Activated T-helper 2 cell treated with anti-CD3 and anti-CD28 coated beads, Interferon-gamma antibody, Interleukin-2, Interleukin-4, amounts not matched to agents 10 μg/mL and 5 μg/mL and 100 μg/mL, durations not matched to agents 14 hours and 24 hours and 36 hours (primary cell): ENCODE measurements at regions of chr12 and their contacts with region 1.

Region 1: GRCh38 chr12:28253161-28253641 is 62.9 kb downstream of the CCDC91 start:
- DNase-seq: peak; percentile 11
- H3K4me3 Mint-ChIP-seq: peak overlapping the region; percentile 59
- H3K27ac Mint-ChIP-seq: peak overlapping the region; percentile 92
- H3K4me1 Mint-ChIP-seq: peaks cover 41% of the 10 kb centered on the region
- H3K27me3 Mint-ChIP-seq: peaks cover 2% of the 10 kb centered on the region

Region 2: GRCh38 chr12:27243804-27244683 is 1009.2 kb before region 1 on chr12 and contains the start of gene STK38L:
- intact Hi-C with region 1: loop called (anchors 5 kb)
- DNase-seq: peak; percentile 96
- H3K4me3 Mint-ChIP-seq: peak within 1 kb of the TSS; percentile 96
- H3K27ac Mint-ChIP-seq: peak within 1 kb of the TSS; percentile 94
- H3K4me1 Mint-ChIP-seq: peaks cover 35% of the 10 kb centered on the region
- H3K27me3 Mint-ChIP-seq: no peaks in the 10 kb centered on the region
- total RNA-seq, gene STK38L: 23.4 and 24.2 TPM in 2 replicates

Region 3: GRCh38 chr12:27984275-27984674 is 268.9 kb before region 1 on chr12:
- intact Hi-C with region 1: no loop called
- DNase-seq: no peak
- H3K4me3 Mint-ChIP-seq: no peak overlapping the region
- H3K27ac Mint-ChIP-seq: no peak overlapping the region
- H3K4me1 Mint-ChIP-seq: no peaks in the 10 kb centered on the region
- H3K27me3 Mint-ChIP-seq: peaks cover 14% of the 10 kb centered on the region

Region 4: GRCh38 chr12:28065889-28066630 is 187.1 kb before region 1 on chr12:
- intact Hi-C with region 1: loop called (anchors 5 kb)
- DNase-seq: no peak
- H3K4me3 Mint-ChIP-seq: no peak overlapping the region
- H3K27ac Mint-ChIP-seq: peak overlapping the region; percentile 12
- H3K4me1 Mint-ChIP-seq: peaks cover 13% of the 10 kb centered on the region
- H3K27me3 Mint-ChIP-seq: peaks cover 4% of the 10 kb centered on the region

Region 5: DNA sequence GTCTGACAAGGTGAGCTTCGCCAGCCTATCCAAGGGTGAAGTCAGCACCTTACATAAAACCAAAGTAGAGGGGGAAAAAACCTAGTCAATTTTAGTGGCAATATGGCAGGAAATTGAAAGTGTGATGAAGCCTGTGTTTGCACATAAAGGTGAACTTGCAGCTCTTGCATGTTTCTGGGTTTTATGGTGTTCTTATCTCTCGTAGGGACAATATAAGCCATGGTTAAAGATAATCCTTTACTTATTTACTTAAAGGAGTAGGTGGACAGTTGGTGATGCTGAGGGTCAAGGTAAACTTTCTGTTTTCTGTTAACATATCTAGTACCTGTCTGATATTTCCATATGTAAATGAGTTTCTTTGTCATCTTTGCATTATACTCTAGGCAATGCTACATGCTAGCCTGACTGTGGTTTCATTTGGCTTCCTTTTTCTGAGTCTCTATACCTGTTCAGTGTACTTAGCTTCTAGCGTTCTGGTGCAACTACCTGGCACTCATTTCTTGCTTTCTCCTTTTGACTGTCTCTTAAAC is 30.1 kb before region 1 on chr12:
- intact Hi-C with region 1: loop called (anchors 1 kb)
- DNase-seq: no peak
- H3K4me3 Mint-ChIP-seq: no peak overlapping the region
- H3K27ac Mint-ChIP-seq: peak overlapping the region; percentile 43
- H3K4me1 Mint-ChIP-seq: peaks cover 32% of the 10 kb centered on the region
- H3K27me3 Mint-ChIP-seq: peaks cover 29% of the 10 kb centered on the region

Region 6: DNA sequence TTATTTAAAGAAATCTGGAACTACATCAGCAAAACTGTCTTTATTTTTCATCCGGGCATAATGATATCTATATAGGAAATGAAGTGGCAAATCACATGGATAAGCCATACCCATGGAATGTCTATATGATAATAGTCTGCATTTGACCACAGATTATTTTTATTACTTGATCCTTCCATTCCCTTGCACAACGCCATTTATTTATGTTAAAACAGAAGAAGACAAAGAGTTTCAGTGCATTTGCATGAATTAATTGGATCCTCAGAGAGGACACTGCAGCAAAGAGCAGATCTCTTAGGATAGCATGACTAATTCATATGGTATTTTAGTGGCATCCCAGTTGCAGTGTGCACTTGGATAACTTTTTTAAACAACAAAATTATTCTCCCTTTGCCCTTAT is 282.0 kb after region 1 on chr12:
- intact Hi-C with region 1: loop called (anchors 5 kb)
- DNase-seq: no peak
- H3K4me3 Mint-ChIP-seq: no peak overlapping the region
- H3K27ac Mint-ChIP-seq: no peak overlapping the region
- H3K4me1 Mint-ChIP-seq: peaks cover 10% of the 10 kb centered on the region
- H3K27me3 Mint-ChIP-seq: no peaks in the 10 kb centered on the region

Region 7: GRCh38 chr12:29082522-29082921 is 829.3 kb after region 1 on chr12:
- intact Hi-C with region 1: loop called (anchors 5 kb)
- DNase-seq: no peak
- H3K4me3 Mint-ChIP-seq: no peak overlapping the region
- H3K27ac Mint-ChIP-seq: no peak overlapping the region
- H3K4me1 Mint-ChIP-seq: peaks cover 5% of the 10 kb centered on the region
- H3K27me3 Mint-ChIP-seq: peaks cover 44% of the 10 kb centered on the region